CD4-positive, alpha-beta memory T cell (primary cell): ENCODE measurements at regions of chr22 and their contacts with region 1.

Region 1: DNA sequence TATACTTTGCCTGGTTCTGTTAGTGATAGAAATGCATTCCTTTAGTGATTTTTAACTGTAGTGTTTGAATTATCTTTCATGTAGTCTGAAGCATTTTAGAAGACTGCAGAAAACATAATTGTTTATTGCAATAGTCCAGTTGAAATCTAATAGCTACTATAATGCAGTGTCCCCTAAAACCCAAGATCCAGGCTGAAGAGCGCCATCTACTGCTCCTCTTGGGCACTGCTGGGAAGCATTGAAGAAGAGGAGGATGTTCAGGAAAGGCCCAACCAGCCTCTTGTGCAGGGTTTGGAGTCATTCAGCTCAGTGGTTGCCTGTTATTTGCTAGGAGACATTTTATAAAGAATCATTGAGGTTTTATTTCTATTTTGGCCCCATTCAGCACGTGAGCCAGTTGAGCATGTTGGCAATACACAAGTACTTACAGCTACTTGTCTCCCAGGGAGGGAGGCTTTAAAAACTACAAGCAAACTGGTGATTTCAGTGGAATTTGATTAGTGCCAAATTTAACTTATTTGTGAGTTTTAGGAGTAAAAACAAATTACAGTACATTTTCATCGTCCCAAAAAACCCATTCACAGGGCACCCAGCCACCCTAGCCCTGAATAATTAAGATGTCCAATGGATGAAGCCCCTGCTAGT is 74.9 kb upstream of the HORMAD2 start:
- DNase-seq: peak; percentile 45 to 53 (median 52)
- H3K4me3 ChIP-seq: no peak overlapping the region
- H3K4me3 Mint-ChIP-seq: no peak overlapping the region
- H3K27ac ChIP-seq: no peak overlapping the region
- H3K27ac Mint-ChIP-seq: peak overlapping the region in 3 of 7 donors; percentile 2 to 60 (median 30)
- H3K4me1 ChIP-seq: no peaks in the 10 kb centered on the region
- H3K4me1 Mint-ChIP-seq: peaks cover 0 to 5% (median 3%) of the 10 kb centered on the region in 4 donors
- H3K27me3 ChIP-seq: no peaks in the 10 kb centered on the region
- H3K27me3 Mint-ChIP-seq: no peaks in the 10 kb centered on the region

Region 2: DNA sequence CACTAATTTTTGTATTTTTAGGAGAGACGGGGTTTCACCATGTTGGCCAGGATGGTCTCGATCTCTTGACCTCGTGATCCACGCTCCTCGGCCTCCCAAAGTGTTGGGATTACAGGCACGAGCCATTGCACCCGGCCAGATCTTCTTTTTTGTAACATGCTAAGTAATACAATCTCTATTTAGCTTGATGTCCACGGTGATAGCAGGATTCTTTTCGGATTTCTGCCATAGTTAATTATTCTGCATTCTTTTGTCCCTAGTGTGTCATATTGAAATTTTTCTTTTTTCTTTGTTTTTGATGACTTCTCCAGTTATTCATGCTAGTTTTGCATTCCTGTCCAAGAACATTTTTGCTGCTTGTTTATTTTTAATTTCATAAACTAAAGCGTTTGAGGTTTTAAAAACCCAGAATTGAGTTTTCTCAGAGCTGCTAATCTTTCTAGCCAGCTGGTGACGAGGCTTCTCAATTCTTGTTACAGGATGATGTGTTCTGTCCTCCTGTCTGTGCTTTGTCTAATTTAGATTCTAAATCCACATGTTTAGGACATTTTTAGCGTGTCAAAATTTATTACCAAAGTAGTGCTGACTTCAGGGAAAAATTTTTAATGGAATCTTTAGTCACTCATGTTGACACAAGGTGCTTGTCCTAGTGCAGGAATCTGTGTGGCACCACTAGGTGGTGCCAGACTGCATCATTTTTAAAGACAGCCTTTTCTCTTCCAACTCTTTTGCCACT is 380.1 kb before region 1 on chr22:
- CTCF ChIA-PET with region 1: interaction called, 12 read pairs
- POLR2A ChIA-PET with region 1: no interaction called
- intact Hi-C with region 1: loop called (anchors 2 kb)
- DNase-seq: peak in 4 of 5 donors; percentile 33 to 48 (median 38)
- H3K4me3 ChIP-seq: no peak overlapping the region
- H3K4me3 Mint-ChIP-seq: peak overlapping the region in 3 of 8 donors; percentile 6 to 47 (median 6)
- H3K27ac ChIP-seq: no peak overlapping the region
- H3K27ac Mint-ChIP-seq: peak overlapping the region in 6 of 7 donors; percentile 8 to 88 (median 48)
- H3K4me1 ChIP-seq: peaks cover 41% of the 10 kb centered on the region
- H3K4me1 Mint-ChIP-seq: peaks cover 49 to 82% (median 64%) of the 10 kb centered on the region in 4 donors
- H3K27me3 ChIP-seq: no peaks in the 10 kb centered on the region
- H3K27me3 Mint-ChIP-seq: no peaks in the 10 kb centered on the region

Region 3: GRCh38 chr22:29689880-29690213 is 315.5 kb before region 1 on chr22:
- CTCF ChIA-PET with region 1: interaction called, 40 read pairs
- POLR2A ChIA-PET with region 1: no interaction called
- intact Hi-C with region 1: no loop called
- DNase-seq: peak in 3 of 5 donors; percentile 16 to 21 (median 16)
- H3K4me3 ChIP-seq: no peak overlapping the region
- H3K4me3 Mint-ChIP-seq: no peak overlapping the region
- H3K27ac ChIP-seq: no peak overlapping the region
- H3K27ac Mint-ChIP-seq: no peak overlapping the region
- H3K4me1 ChIP-seq: no peaks in the 10 kb centered on the region
- H3K4me1 Mint-ChIP-seq: peaks cover 0 to 13% (median 4%) of the 10 kb centered on the region in 4 donors
- H3K27me3 ChIP-seq: no peaks in the 10 kb centered on the region
- H3K27me3 Mint-ChIP-seq: no peaks in the 10 kb centered on the region

Region 4: DNA sequence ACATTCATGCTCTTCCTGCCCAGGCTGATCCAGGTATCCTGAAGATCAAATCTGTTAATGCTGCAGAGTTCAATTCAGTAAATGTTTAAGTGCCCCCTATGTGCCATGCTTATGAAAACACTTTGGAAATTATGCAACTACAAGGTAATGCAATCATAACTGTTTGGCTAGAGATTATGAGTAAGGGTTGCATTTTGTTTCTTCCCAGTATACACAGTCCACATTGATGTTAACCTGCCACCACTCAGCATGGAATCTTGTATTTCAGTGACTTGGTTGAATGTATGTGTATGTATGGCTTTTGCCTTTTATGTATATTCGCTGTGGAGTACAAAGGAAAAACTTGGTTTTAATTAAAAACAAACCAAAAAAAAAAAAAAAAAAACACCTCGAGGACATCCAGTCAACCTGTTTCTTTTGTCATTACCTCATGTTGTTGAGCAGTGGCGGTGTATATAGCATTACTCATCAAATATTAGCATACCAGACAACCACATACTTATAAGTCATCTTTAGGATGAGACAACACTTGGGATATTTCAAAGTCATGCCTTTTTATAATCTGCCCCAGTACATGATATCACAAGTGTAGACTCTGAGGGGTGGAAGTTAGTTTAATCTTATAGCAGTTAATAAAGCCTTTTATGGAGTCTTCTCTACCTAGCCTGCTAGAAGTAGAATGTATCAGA is 11.2 kb before region 1 on chr22:
- CTCF ChIA-PET with region 1: interaction called, 33 read pairs
- POLR2A ChIA-PET with region 1: no interaction called
- intact Hi-C with region 1: no loop called
- DNase-seq: no peak
- H3K4me3 ChIP-seq: no peak overlapping the region
- H3K4me3 Mint-ChIP-seq: no peak overlapping the region
- H3K27ac ChIP-seq: no peak overlapping the region
- H3K27ac Mint-ChIP-seq: peak overlapping the region in 4 of 7 donors; percentile 8 to 79 (median 30)
- H3K4me1 ChIP-seq: no peaks in the 10 kb centered on the region
- H3K4me1 Mint-ChIP-seq: peaks cover 0 to 6% (median 0%) of the 10 kb centered on the region in 4 donors
- H3K27me3 ChIP-seq: no peaks in the 10 kb centered on the region
- H3K27me3 Mint-ChIP-seq: no peaks in the 10 kb centered on the region

Region 5: DNA sequence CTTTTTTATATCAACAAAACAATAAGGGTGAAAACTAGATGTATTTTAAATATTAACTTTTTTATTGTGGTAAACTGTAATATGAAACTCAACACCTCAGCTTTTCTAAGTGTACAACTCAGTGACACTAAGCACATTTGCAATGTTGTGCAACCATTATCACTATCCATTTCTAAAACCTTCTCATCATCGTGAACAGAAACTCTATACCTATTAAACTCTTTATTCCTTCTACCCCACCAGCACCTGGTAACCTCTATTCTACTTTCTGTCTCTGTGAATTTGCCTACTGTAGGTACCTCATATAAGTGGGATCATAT is 84.3 kb after region 1 on chr22:
- CTCF ChIA-PET with region 1: no interaction called
- POLR2A ChIA-PET with region 1: no interaction called
- intact Hi-C with region 1: loop called (anchors 5 kb)
- DNase-seq: no peak
- H3K4me3 ChIP-seq: no peak overlapping the region
- H3K4me3 Mint-ChIP-seq: no peak overlapping the region
- H3K27ac ChIP-seq: no peak overlapping the region
- H3K27ac Mint-ChIP-seq: no peak overlapping the region
- H3K4me1 ChIP-seq: peaks cover 11% of the 10 kb centered on the region
- H3K4me1 Mint-ChIP-seq: peaks cover 7 to 12% (median 9%) of the 10 kb centered on the region in 4 donors
- H3K27me3 ChIP-seq: no peaks in the 10 kb centered on the region
- H3K27me3 Mint-ChIP-seq: peaks cover 1 to 2% of the 10 kb centered on the region in 2 donors